ENCODE measurements at regions of chr11 and their contacts with region 1.

Region 1: DNA sequence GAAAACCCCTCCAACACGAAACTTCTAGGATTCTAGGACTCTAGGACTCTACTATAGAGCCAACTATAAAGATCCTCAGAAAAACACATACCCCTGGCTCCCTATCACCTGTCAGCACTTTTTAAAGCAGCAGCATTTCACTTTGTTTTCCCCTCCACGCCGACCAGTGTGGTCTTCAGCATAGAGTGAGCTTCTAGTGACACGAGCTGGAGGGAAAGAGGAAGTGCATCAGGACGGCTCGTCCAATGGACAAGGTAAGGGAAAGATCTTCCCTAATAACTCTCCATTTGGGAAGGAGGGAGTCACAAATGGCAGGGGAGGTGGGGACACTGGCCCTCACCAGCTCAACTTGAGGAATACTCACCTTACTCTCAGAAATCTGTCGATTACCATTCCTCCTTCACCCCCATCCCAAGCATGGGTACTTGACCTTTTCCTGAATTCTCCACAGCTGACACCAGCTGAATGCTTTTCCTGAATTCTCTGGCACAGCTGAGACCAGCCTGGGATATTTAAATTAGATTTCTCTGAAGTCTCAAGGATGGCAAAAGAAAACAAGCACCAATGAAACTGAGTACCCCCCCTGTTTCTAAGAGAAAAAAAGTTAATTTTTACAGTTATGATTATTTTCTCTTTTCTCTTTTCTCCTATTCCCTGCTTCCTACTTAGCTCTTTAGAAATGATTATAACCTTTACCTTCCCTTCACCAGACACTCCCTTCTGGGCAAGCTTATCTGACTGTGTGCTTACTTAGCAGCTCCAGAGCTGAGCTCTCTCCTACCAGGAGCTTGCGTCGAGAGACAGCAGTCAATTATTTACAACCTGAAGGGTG is 33.3 kb upstream of the NNMT start:
- DNase-seq: no peak
- ATAC-seq: peak; percentile 30

Region 2: DNA sequence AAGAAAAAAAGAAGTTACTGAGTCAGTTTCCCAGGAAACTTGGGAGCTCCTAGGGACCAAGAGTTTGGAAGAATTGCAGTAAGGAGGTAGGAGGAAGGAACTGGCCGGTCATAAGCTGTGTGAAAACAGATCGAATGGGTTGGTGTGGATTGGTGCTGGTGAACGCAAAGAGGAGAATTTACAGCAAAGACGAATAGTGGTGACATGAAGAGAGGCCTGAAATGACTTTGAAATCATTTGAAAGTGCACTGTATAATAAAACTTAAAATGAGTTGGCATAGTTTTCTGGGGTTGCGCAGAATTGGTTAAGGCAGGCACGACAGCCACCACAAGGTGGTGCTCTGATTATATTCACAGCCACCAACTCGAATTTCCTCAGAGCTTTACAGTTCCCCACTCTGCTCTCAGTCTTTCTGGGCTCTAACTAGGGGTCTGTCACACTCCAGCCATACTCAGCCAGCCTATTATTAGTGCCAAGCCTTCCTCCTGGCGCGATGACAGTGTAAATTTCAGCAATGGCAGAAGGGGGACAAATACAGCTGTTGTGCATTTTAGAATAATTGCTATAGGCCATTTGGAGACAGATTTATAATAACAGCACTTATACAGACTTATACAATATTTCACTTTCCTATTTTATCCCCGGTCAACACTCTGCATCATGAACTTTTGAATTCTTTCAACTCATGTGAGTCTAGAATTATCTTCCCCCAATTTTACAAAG is 366.6 kb before region 1 on chr11:
- intact Hi-C with region 1: loop called (anchors 1 kb)
- DNase-seq: no peak
- ATAC-seq: peak; percentile 62

Region 3: GRCh38 chr11:113994077-113994954 is 268.6 kb before region 1 on chr11:
- intact Hi-C with region 1: loop called (anchors 1 kb)
- DNase-seq: no peak
- ATAC-seq: peak; percentile 40

Region 4: GRCh38 chr11:114036156-114036811 is 226.6 kb before region 1 on chr11:
- intact Hi-C with region 1: loop called (anchors 1 kb)
- DNase-seq: peak; percentile 94
- ATAC-seq: peak; percentile 96

Region 5: GRCh38 chr11:114082767-114083181 is 180.1 kb before region 1 on chr11:
- intact Hi-C with region 1: no loop called
- DNase-seq: peak; percentile 68
- ATAC-seq: peak; percentile 15

Region 6: GRCh38 chr11:114197799-114198500 is 64.9 kb before region 1 on chr11:
- intact Hi-C with region 1: loop called (anchors 2 kb)
- DNase-seq: peak; percentile 76
- ATAC-seq: peak; percentile 77

Measured in Right ventricle myocardium inferior (tissue), 1 donor.